ENCODE measurements at regions of chr2 and their contacts with region 1.

Region 1: DNA sequence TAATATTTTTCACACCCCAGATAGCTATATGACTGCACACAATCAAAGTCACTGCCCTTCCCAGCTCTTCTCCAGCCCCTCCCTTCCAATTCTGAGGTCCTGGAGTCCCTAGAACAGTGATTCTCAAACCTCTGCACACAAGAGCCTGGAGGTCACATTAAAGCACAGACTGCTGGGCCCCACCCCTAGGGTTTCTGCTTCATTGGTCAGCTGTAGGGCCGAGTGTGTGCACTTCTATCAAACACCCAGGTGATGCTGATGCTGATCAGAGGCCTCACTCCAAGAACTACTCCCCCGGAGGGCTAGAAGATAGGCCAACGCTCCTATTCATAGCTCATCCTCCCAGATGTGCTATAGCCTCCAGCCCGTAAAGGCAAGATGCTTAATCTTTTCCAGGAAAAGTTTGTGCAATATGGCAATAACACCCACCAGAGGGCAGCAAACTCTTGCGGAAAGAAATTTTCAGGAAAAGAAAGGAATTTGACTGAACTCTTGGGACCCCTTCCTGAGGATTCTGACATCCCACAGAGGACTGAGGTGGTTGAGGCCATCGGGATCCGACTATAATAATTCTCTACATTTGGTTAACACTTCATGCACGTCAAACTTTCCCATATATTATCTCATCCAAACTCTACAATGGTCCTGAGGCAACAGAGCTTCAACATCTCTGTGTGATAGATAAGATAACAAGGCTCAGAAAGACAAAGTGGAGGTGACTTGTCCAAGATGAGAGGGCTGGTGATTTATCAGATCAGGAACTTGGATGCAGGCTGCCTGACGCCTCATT is 194.2 kb upstream of the PKDCC start:
- DNase-seq: no peak
- H3K4me3 ChIP-seq: no peak overlapping the region
- CTCF ChIP-seq: peak; percentile 53

Region 2: DNA sequence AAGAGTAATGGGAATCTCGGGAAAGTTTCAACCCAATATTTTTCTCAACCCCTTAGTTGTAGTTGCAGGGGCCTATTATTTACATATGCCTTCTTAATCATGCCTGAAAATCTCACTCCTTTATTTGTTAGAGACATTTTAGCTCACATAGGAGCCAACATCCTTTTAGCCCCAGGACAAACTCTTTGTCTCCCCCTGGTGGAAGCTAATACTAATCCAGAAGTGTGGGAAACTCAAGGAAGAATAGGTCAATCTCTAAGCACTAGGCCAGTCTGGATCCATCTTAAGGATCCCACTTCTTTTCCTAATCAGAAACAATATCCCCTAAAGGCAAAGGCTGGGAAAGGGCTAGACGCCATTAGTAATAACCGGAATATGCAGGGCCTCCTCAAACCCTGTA is 356.7 kb before region 1 on chr2:
- CTCF ChIA-PET with region 1: no interaction called
- POLR2A ChIA-PET with region 1: no interaction called
- DNase-seq: no peak
- H3K4me3 ChIP-seq: no peak overlapping the region
- CTCF ChIP-seq: no peak

Region 3: DNA sequence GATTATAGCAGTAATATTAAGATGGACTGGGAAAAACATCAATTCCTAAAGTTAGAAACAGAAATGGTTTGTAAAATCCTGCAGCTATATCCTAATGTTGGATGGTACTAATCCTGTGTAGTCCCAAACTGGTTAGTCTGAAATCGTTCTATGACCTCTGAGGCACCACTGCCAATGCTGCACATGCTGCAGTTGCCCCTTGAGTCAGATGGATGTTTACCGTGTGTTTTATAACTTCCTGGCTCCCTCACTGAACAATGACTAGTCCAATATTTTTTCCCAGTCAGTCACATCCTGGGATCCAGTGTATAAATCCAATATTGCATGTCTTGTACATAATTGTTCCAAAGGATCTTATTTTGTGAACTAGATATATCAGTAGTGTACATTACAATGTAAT is 32.5 kb before region 1 on chr2:
- CTCF ChIA-PET with region 1: no interaction called
- POLR2A ChIA-PET with region 1: no interaction called
- DNase-seq: no peak
- H3K4me3 ChIP-seq: no peak overlapping the region
- CTCF ChIP-seq: no peak

Region 4: DNA sequence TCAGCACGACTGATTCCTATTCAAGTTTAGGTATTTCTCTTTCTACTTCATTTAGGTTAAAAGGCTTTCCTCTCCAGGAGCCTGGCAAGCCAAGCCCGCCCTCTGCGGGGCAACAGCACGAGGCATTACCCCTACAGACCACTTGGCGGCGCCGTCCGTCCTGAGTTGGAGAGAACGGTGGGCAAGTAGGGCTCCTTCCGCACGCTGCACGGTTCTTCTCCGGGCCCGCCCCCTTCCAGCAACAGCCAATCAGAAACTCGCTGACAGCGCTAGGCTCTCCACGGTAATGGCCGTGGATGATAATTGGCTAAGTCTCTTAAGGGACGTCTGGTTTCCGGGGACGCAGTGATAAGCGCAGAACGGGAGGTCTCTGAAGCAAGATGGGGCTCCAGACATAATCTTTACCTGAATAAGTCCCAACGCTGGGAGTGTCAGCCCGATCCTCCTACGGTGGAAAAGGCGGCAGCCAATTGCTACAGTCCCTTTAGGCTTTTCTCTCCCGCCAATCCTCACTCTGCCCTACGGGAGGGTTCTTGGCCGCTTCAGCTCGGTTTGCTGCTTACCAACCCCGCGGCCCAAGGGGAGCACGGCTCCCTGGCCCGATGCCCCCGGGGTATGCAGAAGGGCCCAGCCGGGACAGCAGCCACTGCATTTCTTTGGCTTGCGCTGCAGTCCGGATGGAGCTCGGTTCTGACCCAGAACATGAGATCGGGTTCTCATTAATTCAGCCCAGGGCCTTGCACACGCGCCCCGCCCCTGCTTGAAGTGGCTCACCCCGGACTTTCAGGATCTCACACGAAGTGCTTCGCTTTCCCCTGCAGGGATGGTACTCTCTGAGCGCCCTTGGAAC is 12.7 kb before region 1 on chr2:
- CTCF ChIA-PET with region 1: interaction called, 68 read pairs
- POLR2A ChIA-PET with region 1: no interaction called
- DNase-seq: peak; percentile 73
- H3K4me3 ChIP-seq: peak overlapping the region; percentile 78
- CTCF ChIP-seq: peak; percentile 98

Region 5: GRCh38 chr2:41896186-41896846 is 42.7 kb after region 1 on chr2:
- CTCF ChIA-PET with region 1: interaction called, 11 read pairs
- POLR2A ChIA-PET with region 1: interaction called, 3 read pairs
- DNase-seq: no peak
- H3K4me3 ChIP-seq: no peak overlapping the region
- CTCF ChIP-seq: no peak

Region 6: DNA sequence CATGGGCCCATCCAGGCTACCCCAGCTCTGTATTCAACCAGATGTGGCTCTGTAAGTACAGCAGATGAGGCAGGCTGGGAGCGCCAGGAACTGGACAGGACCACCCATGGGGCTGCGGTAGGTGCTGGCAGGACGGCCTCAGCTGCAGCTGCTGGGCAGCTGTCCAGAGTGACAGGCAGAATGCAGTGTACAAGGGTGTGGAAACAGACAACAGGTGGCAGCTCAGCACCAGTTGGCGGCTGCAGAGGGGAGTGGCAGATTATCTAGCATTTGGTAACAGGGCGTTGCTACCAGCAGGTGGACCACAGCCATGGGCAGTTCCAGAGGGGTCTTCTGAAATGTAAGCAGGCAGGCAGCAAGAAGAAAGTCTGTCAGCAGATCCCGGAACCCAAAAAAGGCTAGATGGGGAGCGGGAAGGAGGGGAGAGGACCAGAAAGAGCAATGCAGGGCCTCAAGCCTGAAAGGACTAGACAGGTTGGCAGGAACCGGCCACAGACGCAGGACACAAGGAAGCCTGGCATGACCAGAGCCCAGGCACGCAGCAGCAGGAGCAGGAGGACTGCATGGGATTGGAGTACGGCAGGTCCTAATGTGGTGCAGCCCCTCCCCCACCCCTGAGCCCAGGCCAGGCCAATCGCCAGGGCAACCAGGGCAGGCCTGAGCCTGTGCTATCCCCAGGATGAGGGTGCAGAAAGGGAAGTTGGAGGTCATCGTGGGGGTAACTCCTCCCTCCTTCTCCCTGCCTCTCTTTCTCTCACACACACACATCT is 218.9 kb after region 1 on chr2:
- CTCF ChIA-PET with region 1: interaction called, 30 read pairs
- POLR2A ChIA-PET with region 1: no interaction called
- DNase-seq: no peak
- H3K4me3 ChIP-seq: no peak overlapping the region
- CTCF ChIP-seq: no peak